ENCODE measurements at regions of chr1 and their contacts with region 1.

Region 1: GRCh38 chr1:8314346-8315280 is 3.3 kb upstream of the SLC45A1 start:
- DNase-seq: peak; percentile 86
- ATAC-seq: peak; percentile 80
- H3K4me3 Mint-ChIP-seq: no peak overlapping the region
- H3K27ac Mint-ChIP-seq: peak overlapping the region; percentile 21; the same call in 1 of the 2 replicates
- H3K4me1 Mint-ChIP-seq: peaks cover 43% of the 10 kb centered on the region
- H3K27me3 Mint-ChIP-seq: peaks cover 31% of the 10 kb centered on the region
- CTCF ChIP-seq: peak; percentile 84

Region 2: DNA sequence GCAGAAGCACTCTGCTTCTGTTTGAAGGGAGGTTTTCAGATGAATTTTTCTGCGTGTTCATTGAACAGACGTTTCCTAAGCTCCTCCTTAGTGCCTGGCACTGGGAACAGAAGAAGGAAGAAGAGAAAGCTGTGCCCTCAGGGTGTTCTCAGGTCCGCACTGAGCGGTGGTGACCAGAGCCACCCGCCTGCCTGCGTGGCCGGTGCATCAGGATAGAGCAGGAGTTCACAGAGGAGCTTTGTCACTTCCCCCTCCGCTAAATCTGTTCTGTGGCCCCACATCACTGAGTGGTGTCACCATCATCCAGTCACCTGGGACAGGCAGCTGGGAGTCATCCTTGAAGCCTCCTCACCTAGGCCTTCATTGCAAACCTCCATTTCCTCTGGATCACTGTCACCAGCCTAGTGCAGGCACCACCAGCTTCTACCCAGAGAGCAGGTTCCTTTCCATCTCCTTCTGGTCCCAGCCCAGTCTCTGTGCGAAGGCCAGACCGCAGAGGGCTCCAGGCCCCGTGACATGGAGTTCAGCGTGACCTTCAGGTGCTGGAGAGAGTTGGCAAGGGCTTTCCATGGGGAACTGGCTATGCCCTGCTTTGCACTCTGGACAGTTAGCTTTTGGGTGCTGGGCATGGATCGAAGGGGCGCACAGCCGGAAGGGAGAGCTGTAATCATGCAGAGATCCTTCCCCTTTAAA is 331.4 kb before region 1 on chr1:
- CTCF ChIA-PET with region 1: interaction called, 30 read pairs
- POLR2A ChIA-PET with region 1: interaction called, 3 read pairs
- DNase-seq: no peak
- ATAC-seq: no peak
- H3K4me3 Mint-ChIP-seq: no peak overlapping the region
- H3K27ac Mint-ChIP-seq: peak overlapping the region; percentile 93
- H3K4me1 Mint-ChIP-seq: peaks cover 11% of the 10 kb centered on the region
- H3K27me3 Mint-ChIP-seq: no peaks in the 10 kb centered on the region
- CTCF ChIP-seq: no peak

Region 3: DNA sequence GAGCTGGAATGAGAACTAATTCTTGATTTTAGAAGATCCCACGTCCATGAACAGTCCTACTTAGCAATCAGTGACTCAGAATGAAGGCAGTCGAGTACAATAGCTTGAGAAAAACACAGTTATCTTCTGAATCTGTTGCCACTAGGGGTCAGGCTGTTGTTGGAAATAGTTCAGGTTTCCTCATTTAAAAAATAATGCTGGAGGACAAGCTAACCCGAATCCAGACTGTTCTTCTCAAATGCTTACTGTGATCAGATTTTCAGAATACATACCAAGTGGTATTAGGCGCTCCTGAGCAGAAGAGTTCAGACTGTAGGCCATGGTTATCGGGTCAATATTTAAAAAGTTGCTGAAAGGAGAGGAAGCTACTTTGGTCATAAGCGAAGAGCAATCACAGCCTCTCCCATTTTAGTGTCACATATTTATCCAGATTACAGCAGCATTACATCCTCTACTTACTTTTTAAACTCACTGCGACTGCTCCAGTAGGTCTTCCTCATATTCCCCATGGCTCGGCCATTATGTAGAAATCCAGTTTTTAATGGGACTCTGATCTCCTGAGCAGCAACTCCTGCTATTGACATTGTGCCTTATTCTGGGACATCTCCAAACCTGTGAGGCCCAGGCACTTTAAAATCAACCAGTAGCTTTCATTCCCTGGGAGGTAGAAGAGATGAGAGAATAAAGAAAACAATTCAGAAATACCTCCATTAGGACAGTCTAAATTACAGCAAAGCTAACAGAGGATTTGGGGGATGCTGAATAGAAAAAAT is 299.4 kb before region 1 on chr1:
- CTCF ChIA-PET with region 1: interaction called, 271 read pairs
- POLR2A ChIA-PET with region 1: interaction called, 7 read pairs
- DNase-seq: no peak
- ATAC-seq: peak; percentile 33
- H3K4me3 Mint-ChIP-seq: no peak overlapping the region
- H3K27ac Mint-ChIP-seq: peak overlapping the region; percentile 87
- H3K4me1 Mint-ChIP-seq: peaks cover 54% of the 10 kb centered on the region
- H3K27me3 Mint-ChIP-seq: no peaks in the 10 kb centered on the region
- CTCF ChIP-seq: peak; percentile 50; the same call in 1 of the 2 replicates

Region 4: DNA sequence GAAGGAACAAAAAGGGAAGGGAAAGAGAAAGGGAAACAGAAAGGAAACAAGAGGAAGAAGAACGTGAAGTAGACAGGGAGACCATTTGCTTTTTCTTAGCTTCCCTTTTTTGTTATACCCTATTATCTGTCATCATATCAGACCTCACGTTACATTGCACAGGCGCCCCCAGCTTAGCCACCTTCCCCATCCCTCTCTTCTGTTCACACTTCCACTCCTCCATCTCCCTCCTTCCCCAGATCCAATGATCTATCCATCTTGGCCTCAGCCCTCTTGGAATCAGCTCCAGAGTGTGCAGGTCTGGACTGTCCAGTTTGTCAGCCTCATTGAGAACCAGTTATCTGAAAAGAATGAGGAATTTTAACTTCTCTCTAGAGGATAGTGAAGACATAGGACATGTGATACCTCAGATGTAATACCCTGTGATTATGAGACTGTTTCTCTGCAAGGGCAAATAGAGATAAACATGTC is 187.4 kb before region 1 on chr1:
- CTCF ChIA-PET with region 1: no interaction called
- POLR2A ChIA-PET with region 1: no interaction called
- DNase-seq: no peak
- ATAC-seq: no peak
- H3K4me3 Mint-ChIP-seq: no peak overlapping the region
- H3K27ac Mint-ChIP-seq: no peak overlapping the region
- H3K4me1 Mint-ChIP-seq: peaks cover 2% of the 10 kb centered on the region
- H3K27me3 Mint-ChIP-seq: no peaks in the 10 kb centered on the region; the same call in 1 of the 2 replicates
- CTCF ChIP-seq: no peak

Region 5: GRCh38 chr1:8165595-8166360 is 148.8 kb before region 1 on chr1:
- CTCF ChIA-PET with region 1: interaction called, 41 read pairs
- POLR2A ChIA-PET with region 1: no interaction called
- DNase-seq: peak; percentile 31
- ATAC-seq: peak; percentile 14
- H3K4me3 Mint-ChIP-seq: no peak overlapping the region
- H3K27ac Mint-ChIP-seq: peak overlapping the region; percentile 91
- H3K4me1 Mint-ChIP-seq: peaks cover 46% of the 10 kb centered on the region
- H3K27me3 Mint-ChIP-seq: no peaks in the 10 kb centered on the region
- CTCF ChIP-seq: no peak

Region 6: GRCh38 chr1:8238851-8239305 is 75.7 kb before region 1 on chr1:
- CTCF ChIA-PET with region 1: interaction called, 19 read pairs
- POLR2A ChIA-PET with region 1: no interaction called
- DNase-seq: no peak
- ATAC-seq: peak; percentile 49
- H3K4me3 Mint-ChIP-seq: no peak overlapping the region; the same call in 1 of the 2 replicates
- H3K27ac Mint-ChIP-seq: peak overlapping the region; percentile 46; the same call in 1 of the 2 replicates
- H3K4me1 Mint-ChIP-seq: peaks cover 32% of the 10 kb centered on the region
- H3K27me3 Mint-ChIP-seq: no peaks in the 10 kb centered on the region
- CTCF ChIP-seq: no peak

Region 7: GRCh38 chr1:8348777-8349491 is 34.3 kb after region 1 on chr1:
- CTCF ChIA-PET with region 1: interaction called, 97 read pairs
- POLR2A ChIA-PET with region 1: interaction called, 3 read pairs
- DNase-seq: peak; percentile 86
- ATAC-seq: peak; percentile 73
- H3K4me3 Mint-ChIP-seq: no peak overlapping the region
- H3K27ac Mint-ChIP-seq: no peak overlapping the region
- H3K4me1 Mint-ChIP-seq: peaks cover 26% of the 10 kb centered on the region
- H3K27me3 Mint-ChIP-seq: no peaks in the 10 kb centered on the region
- CTCF ChIP-seq: peak; percentile 80